ENCODE measurements at regions of chr6 and their contacts with region 1.

Region 1: GRCh38 chr6:146277142-146277541 is 248.3 kb downstream of the GRM1 start:
- DNase-seq: no peak

Region 2: GRCh38 chr6:146345598-146345997 is 68.5 kb after region 1 on chr6:
- intact Hi-C with region 1: loop called (anchors 5 kb)
- DNase-seq: no peak

Region 3: GRCh38 chr6:146543211-146543939 is 266.2 kb after region 1 on chr6 and contains the start of gene RAB32:
- intact Hi-C with region 1: loop called (anchors 10 kb)
- DNase-seq: peak; percentile 97
- total RNA-seq, gene RAB32: 8.2 TPM

Region 4: GRCh38 chr6:147043994-147044477 is 766.9 kb after region 1 on chr6:
- intact Hi-C with region 1: no loop called
- DNase-seq: no peak

Measured in cardiac septum (tissue), 1 donor.